ENCODE measurements at regions of chr12 and their contacts with region 1.

Region 1: GRCh38 chr12:112125250-112125999 is at the start of gene TRAFD1:
- DNase-seq: peak; percentile 97 to 99 (median 98)
- H3K4me3 ChIP-seq: peak within 1 kb of the TSS; percentile 88
- H3K4me3 Mint-ChIP-seq: peak within 1 kb of the TSS; percentile 75 to 94 (median 84)
- H3K27ac ChIP-seq: peak within 1 kb of the TSS; percentile 85
- H3K27ac Mint-ChIP-seq: peak within 1 kb of the TSS; percentile 65 to 97 (median 85)
- H3K4me1 ChIP-seq: peaks cover 45% of the 10 kb centered on the region
- H3K4me1 Mint-ChIP-seq: peaks cover 28 to 48% (median 47%) of the 10 kb centered on the region in 3 donors
- H3K27me3 ChIP-seq: no peaks in the 10 kb centered on the region
- H3K27me3 Mint-ChIP-seq: peaks cover 0 to 9% of the 10 kb centered on the region in 2 donors
- total RNA-seq, gene TRAFD1: 34.5 TPM

Region 2: GRCh38 chr12:111405149-111405860 is 720.1 kb before region 1 on chr12:
- CTCF ChIA-PET with region 1: no interaction called
- POLR2A ChIA-PET with region 1: no interaction called
- DNase-seq: peak; percentile 98 to 99 (median 99)
- H3K4me3 ChIP-seq: peak overlapping the region; percentile 56
- H3K4me3 Mint-ChIP-seq: peak overlapping the region; percentile 78 to 96 (median 87)
- H3K27ac ChIP-seq: peak overlapping the region; percentile 92
- H3K27ac Mint-ChIP-seq: peak overlapping the region; percentile 85 to 97 (median 92)
- H3K4me1 ChIP-seq: peaks cover 62% of the 10 kb centered on the region
- H3K4me1 Mint-ChIP-seq: peaks cover 45 to 67% (median 52%) of the 10 kb centered on the region in 3 donors
- H3K27me3 ChIP-seq: no peaks in the 10 kb centered on the region
- H3K27me3 Mint-ChIP-seq: no peaks in the 10 kb centered on the region

Region 3: DNA sequence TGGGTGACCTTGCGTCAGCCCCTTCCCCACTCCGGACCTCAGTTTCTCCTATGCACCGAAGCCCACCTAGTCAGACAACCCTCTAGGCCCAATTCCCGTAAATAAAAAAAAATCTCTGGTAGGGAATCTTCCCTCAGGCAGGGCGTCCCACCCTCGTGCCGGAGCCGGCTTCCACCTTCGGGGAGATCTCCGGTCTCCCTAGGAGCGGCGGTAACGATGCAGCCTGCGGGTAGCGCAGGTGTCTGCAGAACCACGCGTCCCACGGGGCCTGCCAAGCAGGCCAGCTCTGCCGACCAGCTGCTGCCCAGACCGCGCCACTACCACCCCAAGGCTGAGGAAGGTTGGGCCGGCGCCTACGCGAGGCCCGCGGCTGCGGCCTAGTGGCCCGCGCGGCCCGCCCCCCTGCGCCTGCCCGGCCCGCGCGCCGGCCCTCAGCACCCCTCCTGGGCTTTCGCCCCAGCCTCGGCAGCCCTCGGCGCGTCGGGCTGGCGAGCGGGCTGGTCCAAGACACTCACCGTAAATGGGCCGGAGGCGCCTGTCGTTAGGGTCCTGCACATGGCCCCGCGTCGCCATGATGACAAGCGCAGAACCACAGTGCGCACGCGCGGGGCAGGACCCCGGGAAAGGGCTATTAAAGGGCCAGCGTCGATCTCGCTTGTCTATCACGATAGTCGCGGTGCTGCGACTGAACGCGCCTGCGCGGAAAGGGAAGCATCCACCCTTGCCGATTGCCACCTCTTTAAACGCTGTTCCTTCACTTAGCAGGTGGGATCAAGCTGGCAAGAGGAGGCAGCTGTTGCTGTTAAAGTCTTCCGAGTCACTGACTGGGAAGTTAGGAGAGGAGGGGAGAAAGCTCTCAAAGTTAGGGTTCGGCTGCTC is 17.0 kb before region 1 on chr12 and contains the start of gene NAA25:
- CTCF ChIA-PET with region 1: interaction called, 22 read pairs
- POLR2A ChIA-PET with region 1: interaction called, 23 read pairs
- DNase-seq: peak; percentile 82 to 91 (median 84)
- H3K4me3 ChIP-seq: peak within 1 kb of the TSS; percentile 100
- H3K4me3 Mint-ChIP-seq: peak within 1 kb of the TSS; percentile 97 to 100 (median 98)
- H3K27ac ChIP-seq: peak within 1 kb of the TSS; percentile 91
- H3K27ac Mint-ChIP-seq: peak within 1 kb of the TSS; percentile 96 to 100 (median 98)
- H3K4me1 ChIP-seq: peaks cover 29% of the 10 kb centered on the region
- H3K4me1 Mint-ChIP-seq: peaks cover 42 to 44% (median 43%) of the 10 kb centered on the region in 3 donors
- H3K27me3 ChIP-seq: no peaks in the 10 kb centered on the region
- H3K27me3 Mint-ChIP-seq: no peaks in the 10 kb centered on the region
- total RNA-seq, gene NAA25: 39.0 to 41.5 TPM

Region 4: GRCh38 chr12:112418608-112419298 is 293.3 kb after region 1 on chr12 and contains the start of gene PTPN11:
- CTCF ChIA-PET with region 1: no interaction called
- POLR2A ChIA-PET with region 1: interaction called, 11 read pairs
- DNase-seq: peak; percentile 86 to 94 (median 88)
- H3K4me3 ChIP-seq: peak within 1 kb of the TSS; percentile 100
- H3K4me3 Mint-ChIP-seq: peak within 1 kb of the TSS; percentile 94 to 99 (median 98)
- H3K27ac ChIP-seq: peak within 1 kb of the TSS; percentile 96
- H3K27ac Mint-ChIP-seq: peak within 1 kb of the TSS; percentile 95 to 99 (median 99)
- H3K4me1 ChIP-seq: peaks cover 26% of the 10 kb centered on the region
- H3K4me1 Mint-ChIP-seq: peaks cover 38 to 51% (median 44%) of the 10 kb centered on the region in 3 donors
- H3K27me3 ChIP-seq: no peaks in the 10 kb centered on the region
- H3K27me3 Mint-ChIP-seq: peaks cover 0 to 2% of the 10 kb centered on the region in 2 donors
- total RNA-seq, gene PTPN11: 163 to 171 TPM

Measured in CD8-positive, alpha-beta memory T cell (primary cell).